GM12878 (cell line): ENCODE measurements at regions of chr12 and their contacts with region 1.

Region 1: DNA sequence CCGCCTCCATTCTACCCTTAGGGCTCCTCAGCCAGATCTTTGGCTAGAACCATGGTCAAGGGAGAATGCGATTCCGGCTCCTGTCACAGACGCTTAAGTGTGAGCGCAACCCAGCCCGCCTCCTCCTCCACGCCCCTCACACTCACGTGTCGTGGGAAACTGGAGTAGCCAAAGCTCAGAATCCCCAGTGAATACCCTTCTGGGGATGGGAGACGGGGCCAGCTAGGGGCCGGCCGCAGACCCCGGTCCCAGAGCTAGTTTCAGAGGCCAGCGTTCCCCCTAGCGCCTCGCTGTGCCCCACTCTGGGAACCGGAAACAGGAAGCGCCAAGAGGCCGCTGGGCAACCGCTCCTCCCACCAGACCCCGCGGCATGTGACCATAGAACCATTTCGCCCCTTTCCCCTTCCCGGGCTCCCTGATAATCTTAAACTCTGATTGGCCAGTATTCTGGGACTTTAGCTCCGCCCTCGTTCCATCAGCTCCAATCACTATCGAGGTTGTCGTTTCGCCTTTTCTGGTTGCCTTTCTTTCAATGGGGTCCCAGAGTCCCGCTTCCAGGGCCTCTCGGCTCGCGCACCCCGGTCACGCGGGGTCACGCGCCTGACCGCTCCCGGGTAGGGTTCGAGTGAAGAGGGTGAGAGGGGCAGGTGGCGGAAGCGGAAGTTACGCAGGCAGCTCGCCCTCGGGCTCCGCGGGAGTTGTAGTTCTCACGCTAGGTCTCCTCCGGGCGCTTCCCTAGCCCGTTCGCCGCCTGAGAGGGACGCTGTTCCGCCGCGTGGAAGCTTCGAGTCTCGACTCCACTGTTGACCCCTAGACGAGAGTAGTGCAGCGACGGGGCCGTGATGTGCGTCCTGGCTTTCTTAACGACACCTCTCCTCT is at the start of gene M6PR:
- DNase-seq: peak; percentile 94
- ATAC-seq: peak; percentile 90
- H3K4me3 ChIP-seq: peak within 1 kb of the TSS; percentile 86
- H3K27ac ChIP-seq: peak within 1 kb of the TSS; percentile 94
- H3K4me1 ChIP-seq: peaks cover 10% of the 10 kb centered on the region; the same call in 1 of the 2 replicates
- H3K27me3 ChIP-seq: no peaks in the 10 kb centered on the region
- CTCF ChIP-seq: peak; percentile 63 to 84 (median 71)
- EP300 ChIP-seq: 0 out of 4 replicates have a peak, but pooled peaks of 1 of the 2 experiments have one; percentile 39
- POLR2A ChIP-seq: peak; percentile 81
- RAD21 ChIP-seq: peak; percentile 67
- polyA plus RNA-seq, gene M6PR: 65.4 to 101 TPM

Region 2: DNA sequence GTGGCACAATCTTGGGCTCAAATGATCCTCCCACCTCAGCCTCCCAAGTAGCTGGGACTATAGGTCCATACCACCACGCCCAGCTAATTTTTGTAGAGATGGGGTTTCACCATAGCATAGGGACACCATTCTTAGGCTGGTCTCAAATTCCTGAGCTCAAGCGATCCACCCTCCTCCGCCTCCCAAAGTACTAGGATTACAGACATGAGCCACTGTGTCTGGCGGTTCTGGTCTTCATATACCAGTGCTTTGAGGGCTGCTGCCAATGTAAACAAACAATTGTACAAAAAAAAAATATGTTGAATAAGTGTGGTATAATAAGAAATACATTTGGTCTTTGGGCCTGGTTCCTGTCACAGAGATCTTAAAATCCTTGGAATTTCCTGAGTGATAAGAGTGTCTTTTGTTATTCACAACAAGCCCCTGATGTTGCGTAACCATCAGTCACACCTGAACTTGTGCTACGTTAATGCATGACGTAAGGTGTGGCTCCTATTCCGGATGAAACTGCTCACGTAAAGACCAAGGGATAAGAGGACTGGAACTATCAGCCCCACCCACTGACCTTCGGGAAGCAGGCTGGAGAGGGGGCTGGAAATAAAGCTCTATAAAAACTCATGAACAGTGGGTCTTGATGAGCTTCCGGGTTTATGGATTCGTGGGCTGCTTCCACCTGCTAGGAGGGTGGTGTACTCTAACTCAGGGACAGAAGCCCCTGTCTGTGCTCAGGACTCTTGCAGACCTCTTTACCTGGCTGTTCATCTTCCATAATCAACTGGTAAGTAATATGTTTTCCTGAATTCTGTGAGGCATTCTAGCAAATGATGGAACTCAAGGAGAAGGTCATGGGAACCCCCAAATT is 268.3 kb before region 1 on chr12:
- CTCF ChIA-PET with region 1: interaction called, 5 read pairs
- POLR2A ChIA-PET with region 1: no interaction called
- RAD21 ChIA-PET with region 1: no interaction called
- SMC1A ChIA-PET with region 1: no interaction called
- in situ Hi-C with region 1: no loop called
- intact Hi-C with region 1: loop called (anchors 5 kb)
- DNase-seq: no peak
- ATAC-seq: no peak
- H3K4me3 ChIP-seq: no peak overlapping the region
- H3K27ac ChIP-seq: no peak overlapping the region
- H3K4me1 ChIP-seq: no peaks in the 10 kb centered on the region
- H3K27me3 ChIP-seq: no peaks in the 10 kb centered on the region
- CTCF ChIP-seq: no peak
- EP300 ChIP-seq: no peak
- POLR2A ChIP-seq: no peak
- RAD21 ChIP-seq: no peak

Region 3: DNA sequence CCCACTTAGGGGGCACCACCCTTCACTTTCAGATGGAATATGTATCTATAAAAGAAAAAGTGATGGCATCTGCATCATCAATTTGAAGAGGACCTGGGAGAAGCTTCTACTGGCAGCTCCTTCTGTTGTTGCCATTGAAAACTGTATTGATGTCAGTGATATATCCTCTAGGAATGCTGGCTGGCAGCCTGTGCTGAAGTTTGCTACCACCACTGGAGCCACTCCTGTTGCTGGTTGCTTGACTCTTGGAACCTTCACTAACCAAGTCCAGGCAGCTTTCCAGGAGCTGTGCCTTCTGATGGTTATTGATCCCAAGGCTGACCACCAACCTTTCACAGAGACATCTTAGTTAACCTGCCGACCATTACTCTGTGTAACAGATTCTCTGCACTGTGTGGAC is 207.1 kb before region 1 on chr12:
- CTCF ChIA-PET with region 1: no interaction called
- POLR2A ChIA-PET with region 1: no interaction called
- RAD21 ChIA-PET with region 1: no interaction called
- SMC1A ChIA-PET with region 1: no interaction called
- in situ Hi-C with region 1: no loop called
- intact Hi-C with region 1: no loop called
- DNase-seq: no peak
- ATAC-seq: no peak
- H3K4me3 ChIP-seq: no peak overlapping the region
- H3K27ac ChIP-seq: no peak overlapping the region
- H3K4me1 ChIP-seq: no peaks in the 10 kb centered on the region
- H3K27me3 ChIP-seq: no peaks in the 10 kb centered on the region
- CTCF ChIP-seq: no peak
- EP300 ChIP-seq: no peak
- POLR2A ChIP-seq: no peak
- RAD21 ChIP-seq: no peak

Region 4: DNA sequence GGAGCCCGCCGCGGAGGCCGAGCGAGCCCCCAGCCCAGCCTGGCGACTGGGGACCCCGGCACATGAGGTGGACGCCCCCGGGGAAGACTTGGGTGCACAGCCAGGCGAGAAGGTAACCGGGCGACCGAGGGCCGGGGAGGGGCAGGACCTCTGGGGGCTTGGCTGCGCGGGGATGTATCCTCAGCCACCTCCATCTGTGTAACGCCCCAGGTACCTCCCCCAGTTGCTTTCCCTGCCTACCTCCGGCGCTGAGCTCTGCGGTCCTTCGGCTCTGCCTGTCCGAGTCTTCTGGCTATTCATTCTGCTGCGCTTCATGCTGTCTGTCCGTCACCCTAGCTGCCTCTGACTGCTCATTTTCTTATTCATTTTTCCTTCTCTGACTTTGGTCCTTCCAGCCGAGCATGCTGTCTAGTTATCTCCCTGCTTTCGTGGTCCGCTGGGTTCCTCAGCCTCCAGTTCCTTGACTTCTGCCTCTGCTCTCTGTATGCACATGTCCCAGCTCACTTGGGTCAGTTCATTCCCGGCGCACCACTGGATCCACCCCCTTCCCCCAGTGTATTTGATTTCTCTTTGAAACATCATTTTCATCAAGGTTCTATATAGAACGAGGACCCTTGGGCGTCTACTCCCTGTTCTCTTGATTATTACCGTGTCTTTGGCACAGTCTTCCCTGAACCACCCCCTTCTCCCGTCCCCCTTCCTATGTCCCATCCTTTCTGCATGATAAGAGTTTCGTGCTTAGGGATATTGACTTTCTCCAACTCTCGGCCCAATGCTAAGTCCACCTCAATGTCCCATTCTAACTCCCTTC is 34.7 kb before region 1 on chr12:
- CTCF ChIA-PET with region 1: interaction called, 10 read pairs
- POLR2A ChIA-PET with region 1: interaction called, 4 read pairs
- RAD21 ChIA-PET with region 1: interaction called, 14 read pairs
- SMC1A ChIA-PET with region 1: interaction called, 12 read pairs
- in situ Hi-C with region 1: no loop called
- intact Hi-C with region 1: loop called (anchors 2 kb)
- DNase-seq: no peak
- ATAC-seq: peak; percentile 90
- H3K4me3 ChIP-seq: peak overlapping the region; percentile 71
- H3K27ac ChIP-seq: no peak overlapping the region
- H3K4me1 ChIP-seq: peaks cover 4% of the 10 kb centered on the region
- H3K27me3 ChIP-seq: no peaks in the 10 kb centered on the region; a peak in 1 of 4 replicates
- CTCF ChIP-seq: no peak
- EP300 ChIP-seq: no peak
- POLR2A ChIP-seq: no peak
- RAD21 ChIP-seq: no peak

Region 5: GRCh38 chr12:8996682-8997360 is 47.2 kb after region 1 on chr12:
- CTCF ChIA-PET with region 1: no interaction called
- POLR2A ChIA-PET with region 1: no interaction called
- RAD21 ChIA-PET with region 1: interaction called, 3 read pairs
- SMC1A ChIA-PET with region 1: interaction called, 3 read pairs
- in situ Hi-C with region 1: no loop called
- intact Hi-C with region 1: loop called (anchors 2 kb)
- DNase-seq: peak; percentile 77
- ATAC-seq: peak; percentile 98
- H3K4me3 ChIP-seq: 0 out of 2 replicates have a peak overlapping the region, but pooled peaks have one; percentile 14
- H3K27ac ChIP-seq: peak overlapping the region; percentile 20; the same call in 1 of the 2 replicates
- H3K4me1 ChIP-seq: peaks cover 16% of the 10 kb centered on the region; the same call in 1 of the 2 replicates
- H3K27me3 ChIP-seq: no peaks in the 10 kb centered on the region
- CTCF ChIP-seq: no peak
- EP300 ChIP-seq: peak; percentile 94 to 97
- POLR2A ChIP-seq: no peak
- RAD21 ChIP-seq: no peak

Region 6: GRCh38 chr12:9032202-9033178 is 82.9 kb after region 1 on chr12:
- CTCF ChIA-PET with region 1: interaction called, 30 read pairs
- POLR2A ChIA-PET with region 1: interaction called, 8 read pairs
- RAD21 ChIA-PET with region 1: interaction called, 23 read pairs
- SMC1A ChIA-PET with region 1: interaction called, 36 read pairs
- in situ Hi-C with region 1: no loop called
- intact Hi-C with region 1: no loop called
- DNase-seq: no peak
- ATAC-seq: peak; percentile 66
- H3K4me3 ChIP-seq: no peak overlapping the region
- H3K27ac ChIP-seq: no peak overlapping the region
- H3K4me1 ChIP-seq: no peaks in the 10 kb centered on the region
- H3K27me3 ChIP-seq: no peaks in the 10 kb centered on the region
- CTCF ChIP-seq: peak in 2 of 3 experiments; percentile 8 to 42; a peak in 2 of 6 replicates
- EP300 ChIP-seq: no peak
- POLR2A ChIP-seq: no peak
- RAD21 ChIP-seq: peak; percentile 49

Region 7: DNA sequence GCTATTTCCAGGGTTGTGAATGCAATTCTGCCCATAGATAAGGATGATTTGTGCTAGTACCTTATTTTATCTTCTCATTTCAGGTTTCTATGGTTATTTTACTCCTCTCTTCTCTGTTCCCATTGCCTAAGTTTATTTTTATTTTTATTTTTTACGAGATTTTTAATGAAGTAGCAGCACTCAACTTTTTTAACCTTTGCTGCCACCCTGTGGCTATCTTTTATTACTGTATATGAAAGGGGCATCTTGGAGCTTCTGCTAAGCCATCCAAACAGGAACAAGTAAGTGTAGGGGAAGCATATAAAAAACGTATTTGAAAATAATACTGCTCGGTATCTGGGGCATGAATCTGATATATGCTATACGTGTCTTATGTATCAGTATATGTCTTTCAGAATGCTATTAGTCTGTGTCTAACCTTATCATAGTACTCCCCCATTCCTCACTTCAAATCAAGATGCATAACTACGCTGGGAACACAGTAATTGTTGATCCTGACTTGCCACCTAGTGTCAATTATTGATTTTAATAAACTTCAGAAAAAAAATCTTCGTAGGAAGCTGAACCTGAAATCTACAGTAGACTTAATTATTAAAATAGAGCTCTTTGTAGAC is 100.0 kb after region 1 on chr12:
- CTCF ChIA-PET with region 1: interaction called, 12 read pairs
- POLR2A ChIA-PET with region 1: no interaction called
- RAD21 ChIA-PET with region 1: no interaction called
- SMC1A ChIA-PET with region 1: interaction called, 4 read pairs
- in situ Hi-C with region 1: loop called (anchors 5 kb)
- intact Hi-C with region 1: no loop called
- DNase-seq: no peak
- ATAC-seq: peak; percentile 74
- H3K4me3 ChIP-seq: no peak overlapping the region
- H3K27ac ChIP-seq: no peak overlapping the region
- H3K4me1 ChIP-seq: no peaks in the 10 kb centered on the region
- H3K27me3 ChIP-seq: peaks cover 0 to 3% of the 10 kb centered on the region in 2 experiments; a peak in 2 of 4 replicates
- CTCF ChIP-seq: peak; percentile 34 to 53 (median 50)
- EP300 ChIP-seq: no peak
- POLR2A ChIP-seq: no peak
- RAD21 ChIP-seq: peak; percentile 61